Pancreas (tissue), 10 donors: ENCODE measurements at regions of chr20 and their contacts with region 1.

Region 1: GRCh38 chr20:1330075-1330830 is 1.3 kb upstream of the SDCBP2 start:
- DNase-seq: peak in 5 of 6 donors; percentile 84 to 88 (median 86)
- ATAC-seq: peak; percentile 72 to 77 (median 76)
- H3K4me3 ChIP-seq: no peak overlapping the region
- H3K27ac ChIP-seq: peak overlapping the region; percentile 35 to 97 (median 90)
- H3K4me1 ChIP-seq: peaks cover 30 to 42% (median 42%) of the 10 kb centered on the region in 3 donors
- H3K27me3 ChIP-seq: no peaks in the 10 kb centered on the region
- CTCF ChIP-seq: no peak

Region 2: DNA sequence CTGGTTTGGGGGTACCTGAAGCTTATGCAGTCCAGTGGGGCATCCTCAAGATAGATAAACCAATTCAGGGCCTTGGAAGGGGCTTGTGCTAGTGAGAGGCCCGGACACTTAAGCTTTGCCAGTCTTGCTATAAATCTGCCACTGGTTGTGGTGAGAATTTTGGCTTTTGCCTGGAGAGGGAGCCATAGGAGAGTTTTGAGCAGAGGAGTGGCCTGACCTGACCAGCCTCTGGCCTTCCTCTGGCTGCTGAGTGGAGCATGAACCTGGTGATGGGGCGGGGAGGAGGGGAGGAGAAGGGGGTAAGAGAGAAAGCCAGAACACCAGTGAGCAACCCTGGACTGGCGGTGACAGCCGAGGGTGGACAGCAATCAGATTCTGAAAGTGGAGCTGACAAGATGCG is 152.6 kb before region 1 on chr20:
- intact Hi-C with region 1: no loop called
- DNase-seq: no peak
- ATAC-seq: no peak
- H3K4me3 ChIP-seq: no peak overlapping the region
- H3K27ac ChIP-seq: no peak overlapping the region
- H3K4me1 ChIP-seq: no peaks in the 10 kb centered on the region
- H3K27me3 ChIP-seq: no peaks in the 10 kb centered on the region
- CTCF ChIP-seq: no peak

Region 3: DNA sequence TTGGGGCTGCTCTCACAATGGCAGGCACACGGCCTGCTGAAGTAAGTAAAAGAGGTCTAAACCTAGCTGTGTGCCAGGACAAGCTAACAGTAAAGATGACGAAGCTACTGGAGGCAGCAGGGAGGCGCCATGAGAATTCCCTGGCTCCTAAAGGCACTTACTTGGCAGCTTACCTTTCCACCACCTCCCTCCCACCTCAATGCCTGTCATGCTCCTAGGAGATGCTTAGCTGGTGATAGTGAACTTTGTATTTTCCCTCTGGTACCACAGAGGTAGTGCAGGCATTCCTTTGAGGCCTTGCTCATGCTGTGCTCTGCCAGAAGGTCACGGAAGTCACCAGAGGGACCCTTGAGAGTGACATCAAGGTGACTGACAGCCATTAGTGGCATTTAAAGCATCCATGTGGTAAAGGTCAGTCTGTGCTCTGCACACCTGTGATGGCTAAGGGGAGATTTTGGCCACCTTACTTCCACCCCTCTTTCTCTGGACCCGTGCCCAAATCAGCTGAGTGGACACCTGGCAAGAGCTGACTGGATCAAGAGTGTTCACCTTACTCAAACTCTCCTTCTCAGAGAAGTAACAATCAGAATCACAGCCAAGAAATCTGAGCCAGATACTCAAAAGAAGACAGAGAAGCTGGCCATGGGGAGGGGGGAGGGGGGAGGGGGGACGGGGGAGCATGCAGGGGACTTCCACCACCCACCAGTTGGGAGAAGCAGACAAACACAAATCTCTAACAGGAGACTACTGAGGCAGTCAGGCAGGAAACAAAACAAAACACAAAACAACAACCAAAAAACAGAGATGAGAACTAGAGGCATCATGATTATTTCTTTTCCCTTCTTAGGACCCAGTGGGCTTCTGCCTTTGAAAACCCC is 59.7 kb after region 1 on chr20:
- intact Hi-C with region 1: loop called in 1 of 3 experiments (anchors 10 kb)
- DNase-seq: peak in 1 of 6 donors; percentile 44
- ATAC-seq: no peak
- H3K4me3 ChIP-seq: peak overlapping the region in 1 of 4 donors; percentile 92
- H3K27ac ChIP-seq: peak overlapping the region in 3 of 4 donors; percentile 8 to 22 (median 18)
- H3K4me1 ChIP-seq: peaks cover 11 to 45% (median 18%) of the 10 kb centered on the region in 3 donors
- H3K27me3 ChIP-seq: no peaks in the 10 kb centered on the region
- CTCF ChIP-seq: no peak